ENCODE measurements at regions of chr1 and their contacts with region 1.

Region 1: DNA sequence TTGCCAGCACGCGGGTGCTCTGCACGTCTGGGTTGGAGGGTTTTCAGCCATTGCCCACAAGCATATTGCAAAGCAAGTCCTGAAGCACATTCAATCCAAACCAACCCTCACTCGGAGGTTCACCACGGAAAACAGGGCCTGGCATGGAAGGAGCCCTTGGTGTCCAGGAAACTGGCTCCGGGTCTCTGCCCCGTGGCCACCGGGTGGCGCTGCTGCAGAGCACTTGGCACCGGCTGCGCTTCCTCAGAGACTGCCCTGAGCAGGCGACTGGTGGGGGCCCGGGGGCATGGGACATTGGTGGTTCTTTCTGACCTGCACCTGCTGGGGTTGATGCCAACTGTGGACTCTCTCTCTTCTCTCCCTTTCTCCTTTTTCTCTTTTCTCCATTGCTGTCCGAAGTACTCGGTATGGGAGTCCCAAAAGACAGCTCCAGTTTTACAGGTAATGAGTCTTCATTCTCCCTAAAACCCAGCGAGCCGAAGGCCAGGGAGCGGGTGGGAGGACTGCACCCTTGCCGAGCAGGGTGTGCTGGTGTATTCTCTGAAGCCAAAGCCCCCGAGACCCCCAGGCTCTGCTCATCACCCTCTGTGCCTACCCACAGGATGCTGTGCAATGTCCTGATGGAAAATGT is 4.1 kb upstream of the KCNAB2 start:
- DNase-seq: peak; percentile 29
- H3K4me3 ChIP-seq: no peak overlapping the region
- H3K27ac ChIP-seq: no peak overlapping the region
- H3K4me1 ChIP-seq: no peaks in the 10 kb centered on the region
- H3K27me3 ChIP-seq: no peaks in the 10 kb centered on the region
- CTCF ChIP-seq: peak; percentile 73 to 82
- POLR2A ChIP-seq: no peak

Region 2: GRCh38 chr1:5779598-5780323 is 261.8 kb before region 1 on chr1:
- CTCF ChIA-PET with region 1: no interaction called
- POLR2A ChIA-PET with region 1: no interaction called
- dilution Hi-C with region 1: no loop called
- intact Hi-C with region 1: no loop called
- DNase-seq: no peak
- H3K4me3 ChIP-seq: no peak overlapping the region
- H3K27ac ChIP-seq: no peak overlapping the region
- H3K4me1 ChIP-seq: no peaks in the 10 kb centered on the region
- H3K27me3 ChIP-seq: no peaks in the 10 kb centered on the region
- CTCF ChIP-seq: no peak
- POLR2A ChIP-seq: no peak

Region 3: GRCh38 chr1:6026095-6026809 is 15.3 kb before region 1 on chr1:
- CTCF ChIA-PET with region 1: no interaction called
- POLR2A ChIA-PET with region 1: no interaction called
- dilution Hi-C with region 1: no loop called
- intact Hi-C with region 1: no loop called
- DNase-seq: no peak
- H3K4me3 ChIP-seq: no peak overlapping the region
- H3K27ac ChIP-seq: no peak overlapping the region
- H3K4me1 ChIP-seq: no peaks in the 10 kb centered on the region
- H3K27me3 ChIP-seq: no peaks in the 10 kb centered on the region
- CTCF ChIP-seq: no peak
- POLR2A ChIP-seq: no peak

Region 4: GRCh38 chr1:6071219-6071618 is 29.7 kb after region 1 on chr1:
- CTCF ChIA-PET with region 1: no interaction called
- POLR2A ChIA-PET with region 1: no interaction called
- dilution Hi-C with region 1: no loop called
- intact Hi-C with region 1: no loop called
- DNase-seq: no peak
- H3K4me3 ChIP-seq: no peak overlapping the region
- H3K27ac ChIP-seq: no peak overlapping the region
- H3K4me1 ChIP-seq: peaks cover 7% of the 10 kb centered on the region
- H3K27me3 ChIP-seq: no peaks in the 10 kb centered on the region
- CTCF ChIP-seq: no peak
- POLR2A ChIP-seq: no peak

Region 5: DNA sequence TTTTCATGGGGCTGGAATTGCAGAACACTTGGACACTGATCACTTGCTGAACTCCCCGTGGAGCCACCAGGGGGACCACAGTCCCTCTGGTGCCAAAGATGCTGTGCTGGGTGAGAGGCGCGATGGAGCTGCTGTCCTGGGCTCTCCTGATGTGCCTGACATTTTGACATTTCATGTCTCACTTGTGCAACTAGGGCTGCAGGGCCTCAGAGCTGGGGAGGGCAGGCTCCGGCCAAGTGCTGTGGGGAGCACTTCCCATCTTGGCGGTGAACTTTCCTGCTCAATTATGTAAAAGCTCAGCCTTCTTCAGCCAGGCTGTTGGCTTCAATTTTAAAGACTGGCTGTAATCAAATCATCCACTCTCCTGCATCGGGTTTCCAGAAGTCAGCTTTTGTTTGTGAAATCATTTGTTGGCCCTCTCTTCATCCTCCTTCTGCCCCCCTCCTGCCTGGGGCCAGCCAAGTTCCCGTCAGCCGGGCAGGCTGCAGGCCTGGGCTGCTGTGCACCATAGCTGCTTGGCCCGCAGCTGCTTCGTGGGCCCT is 41.0 kb after region 1 on chr1:
- CTCF ChIA-PET with region 1: interaction called, 6 read pairs
- POLR2A ChIA-PET with region 1: no interaction called
- dilution Hi-C with region 1: no loop called
- intact Hi-C with region 1: loop called (anchors 1 kb)
- DNase-seq: no peak
- H3K4me3 ChIP-seq: no peak overlapping the region
- H3K27ac ChIP-seq: no peak overlapping the region
- H3K4me1 ChIP-seq: no peaks in the 10 kb centered on the region
- H3K27me3 ChIP-seq: no peaks in the 10 kb centered on the region
- CTCF ChIP-seq: peak in 1 of 2 donors; percentile 57
- POLR2A ChIP-seq: no peak

Region 6: GRCh38 chr1:6378096-6378746 is 336.7 kb after region 1 on chr1:
- CTCF ChIA-PET with region 1: no interaction called
- POLR2A ChIA-PET with region 1: no interaction called
- dilution Hi-C with region 1: no loop called
- intact Hi-C with region 1: no loop called
- DNase-seq: no peak
- H3K4me3 ChIP-seq: no peak overlapping the region
- H3K27ac ChIP-seq: no peak overlapping the region
- H3K4me1 ChIP-seq: no peaks in the 10 kb centered on the region
- H3K27me3 ChIP-seq: no peaks in the 10 kb centered on the region
- CTCF ChIP-seq: peak in 1 of 2 donors; percentile 21
- POLR2A ChIP-seq: no peak